ENCODE measurements at regions of chr11 and their contacts with region 1.

Region 1: GRCh38 chr11:59753650-59754493 is 1.3 kb upstream of the STX3 start:
- DNase-seq: peak; percentile 90
- ATAC-seq: peak; percentile 26
- H3K4me3 ChIP-seq: peak overlapping the region; percentile 92
- H3K27ac ChIP-seq: no peak overlapping the region
- H3K4me1 ChIP-seq: peaks cover 20% of the 10 kb centered on the region
- H3K27me3 ChIP-seq: no peaks in the 10 kb centered on the region
- CTCF ChIP-seq: peak; percentile 96

Region 2: GRCh38 chr11:59550368-59550841 is 203.5 kb before region 1 on chr11:
- CTCF ChIA-PET with region 1: no interaction called
- POLR2A ChIA-PET with region 1: no interaction called
- intact Hi-C with region 1: loop called (anchors 10 kb)
- DNase-seq: peak; percentile 99
- ATAC-seq: peak; percentile 91
- H3K4me3 ChIP-seq: peak overlapping the region; percentile 73
- H3K27ac ChIP-seq: peak overlapping the region; percentile 68
- H3K4me1 ChIP-seq: peaks cover 9% of the 10 kb centered on the region
- H3K27me3 ChIP-seq: no peaks in the 10 kb centered on the region
- CTCF ChIP-seq: peak; percentile 54

Region 3: DNA sequence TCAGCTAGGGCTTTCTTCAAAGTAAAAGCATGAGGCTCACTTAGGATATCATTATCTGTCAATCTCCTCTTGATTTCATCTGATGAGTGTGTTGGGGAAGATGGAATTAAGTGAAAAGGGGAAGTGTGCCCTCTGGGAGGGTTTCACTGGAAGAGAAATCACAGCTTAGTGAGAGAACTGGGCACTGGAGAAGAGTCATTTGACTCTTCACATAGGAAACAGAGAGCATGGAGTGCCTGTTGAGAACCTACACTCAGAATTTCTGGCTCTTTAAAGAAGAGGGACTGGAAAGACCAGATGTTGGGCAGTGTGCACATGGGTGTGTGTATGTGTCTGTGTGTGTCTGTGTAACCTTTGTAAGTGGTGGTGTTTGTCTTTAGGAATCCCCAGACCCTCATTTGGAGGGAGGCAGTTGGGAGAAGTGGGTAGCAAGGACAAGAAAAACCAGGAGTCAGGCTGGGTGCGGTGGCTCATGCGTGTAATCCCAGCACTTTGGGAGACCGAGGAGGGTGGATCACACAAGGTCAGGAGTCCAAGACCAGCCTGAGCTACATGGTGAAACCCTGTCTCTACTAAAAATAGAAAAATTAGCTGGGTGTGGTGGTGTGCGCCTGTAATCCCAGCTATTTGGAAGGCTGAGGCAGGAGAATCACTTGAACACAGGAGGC is 11.3 kb after region 1 on chr11:
- CTCF ChIA-PET with region 1: no interaction called
- POLR2A ChIA-PET with region 1: no interaction called
- intact Hi-C with region 1: no loop called
- DNase-seq: no peak
- ATAC-seq: no peak
- H3K4me3 ChIP-seq: no peak overlapping the region
- H3K27ac ChIP-seq: no peak overlapping the region
- H3K4me1 ChIP-seq: no peaks in the 10 kb centered on the region
- H3K27me3 ChIP-seq: no peaks in the 10 kb centered on the region
- CTCF ChIP-seq: no peak

Region 4: DNA sequence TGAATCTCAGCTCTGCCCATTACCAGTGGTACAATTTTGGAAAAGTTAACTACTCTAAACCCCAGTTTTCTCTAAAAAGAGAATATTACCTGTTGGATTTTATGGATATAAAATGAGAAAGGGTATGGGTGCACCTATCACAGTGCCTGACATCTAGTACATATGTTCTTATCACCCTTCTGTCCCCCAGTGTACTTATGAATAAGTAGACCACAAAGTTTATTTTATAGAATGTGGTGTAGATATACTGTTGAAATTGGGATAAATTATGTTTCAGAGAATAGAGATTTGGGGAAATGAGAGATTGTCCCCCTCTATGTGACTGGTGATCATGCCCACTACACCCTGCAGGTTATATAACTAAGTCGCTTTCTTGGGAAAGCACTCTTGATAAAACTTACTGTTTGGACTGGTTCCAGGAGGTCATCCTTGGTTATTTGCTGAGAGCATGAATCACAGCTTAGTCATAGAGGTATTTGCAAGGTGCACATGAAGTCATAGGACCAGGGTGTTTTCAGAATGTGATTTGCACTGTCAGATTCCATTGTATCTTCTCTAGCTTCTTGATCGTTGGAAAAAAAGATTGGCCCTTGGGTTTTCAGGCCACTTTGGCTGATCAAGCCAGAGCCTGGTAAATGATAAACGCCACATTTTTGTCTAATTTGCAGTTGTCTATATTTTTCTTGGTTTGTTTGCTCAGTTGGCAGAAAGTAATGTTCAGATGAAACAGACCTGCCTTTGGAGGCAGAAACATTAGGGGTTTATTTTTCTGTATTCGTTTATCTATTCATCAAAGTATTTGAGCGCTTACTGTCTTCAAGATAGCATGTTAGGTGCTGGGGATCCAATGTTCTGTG is 22.6 kb after region 1 on chr11:
- CTCF ChIA-PET with region 1: interaction called, 4 read pairs
- POLR2A ChIA-PET with region 1: interaction called, 9 read pairs
- intact Hi-C with region 1: loop called (anchors 1 kb)
- DNase-seq: peak; percentile 99
- ATAC-seq: peak; percentile 83
- H3K4me3 ChIP-seq: peak overlapping the region; percentile 22; the same call in 1 of the 2 replicates
- H3K27ac ChIP-seq: peak overlapping the region; percentile 39
- H3K4me1 ChIP-seq: peaks cover 32% of the 10 kb centered on the region
- H3K27me3 ChIP-seq: no peaks in the 10 kb centered on the region
- CTCF ChIP-seq: no peak

Region 5: DNA sequence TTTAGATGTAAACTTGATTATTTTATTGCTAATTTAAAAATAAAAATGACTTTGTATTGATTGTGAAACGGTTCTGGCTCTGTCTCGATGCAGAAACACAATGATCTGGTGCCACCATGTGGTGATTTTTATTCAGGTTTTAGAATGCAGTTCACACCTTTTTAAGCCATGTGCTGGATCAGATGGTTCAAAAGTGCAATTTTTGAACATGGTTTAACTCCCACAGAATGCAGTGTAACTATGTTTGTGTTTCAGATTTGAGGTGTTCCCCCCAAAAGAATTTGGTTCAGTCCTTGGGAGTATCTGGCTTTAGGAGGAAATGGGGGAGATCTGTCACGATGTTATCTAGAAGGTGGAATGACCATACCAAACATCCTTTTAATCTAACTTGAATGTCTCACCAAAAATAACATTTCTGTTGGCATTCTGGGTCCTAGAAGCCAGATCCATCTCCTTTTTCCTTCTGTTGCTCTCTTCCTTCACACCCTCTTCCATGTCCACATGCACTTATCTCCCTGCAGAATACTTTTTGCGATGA is 48.8 kb after region 1 on chr11:
- CTCF ChIA-PET with region 1: interaction called, 29 read pairs
- POLR2A ChIA-PET with region 1: interaction called, 6 read pairs
- intact Hi-C with region 1: loop called (anchors 1 kb)
- DNase-seq: peak; percentile 84
- ATAC-seq: peak; percentile 46
- H3K4me3 ChIP-seq: no peak overlapping the region
- H3K27ac ChIP-seq: no peak overlapping the region
- H3K4me1 ChIP-seq: peaks cover 25% of the 10 kb centered on the region
- H3K27me3 ChIP-seq: no peaks in the 10 kb centered on the region
- CTCF ChIP-seq: peak; percentile 89

Region 6: DNA sequence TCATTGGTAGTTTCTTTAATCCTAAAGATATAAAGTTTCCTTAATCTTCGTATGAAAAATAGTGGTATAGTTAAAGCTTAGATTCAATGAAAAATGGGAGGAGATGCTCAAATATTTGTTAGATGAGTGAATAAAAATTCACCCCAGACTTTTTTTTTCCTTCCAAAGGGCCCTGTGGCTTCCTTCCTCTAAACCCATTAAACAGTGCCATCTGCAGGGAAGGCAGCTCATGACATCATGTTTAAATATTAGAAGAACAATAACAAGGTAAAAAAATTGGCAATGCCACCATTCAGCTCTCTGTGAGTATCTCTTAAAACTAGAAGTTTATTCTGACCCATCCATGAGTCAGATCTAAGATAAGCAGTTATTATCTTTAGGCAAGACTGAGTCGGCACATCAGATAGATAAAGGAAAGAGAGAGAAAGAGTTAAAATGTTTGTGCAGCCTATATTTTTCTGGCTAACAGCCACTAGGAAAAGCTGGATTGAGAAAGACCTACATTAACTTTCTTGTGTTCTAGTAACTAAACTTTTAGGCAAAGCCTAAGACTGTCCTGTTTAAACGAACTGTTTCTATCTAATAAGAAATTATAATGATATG is 165.2 kb after region 1 on chr11:
- CTCF ChIA-PET with region 1: no interaction called
- POLR2A ChIA-PET with region 1: no interaction called
- intact Hi-C with region 1: loop called (anchors 1 kb)
- DNase-seq: peak; percentile 91
- ATAC-seq: peak; percentile 46; the same call in 1 of the 2 replicates
- H3K4me3 ChIP-seq: no peak overlapping the region
- H3K27ac ChIP-seq: peak overlapping the region; percentile 11
- H3K4me1 ChIP-seq: peaks cover 9% of the 10 kb centered on the region
- H3K27me3 ChIP-seq: no peaks in the 10 kb centered on the region
- CTCF ChIP-seq: peak; percentile 92

Region 7: GRCh38 chr11:60121264-60121663 is 367.4 kb after region 1 on chr11:
- CTCF ChIA-PET with region 1: no interaction called
- POLR2A ChIA-PET with region 1: no interaction called
- intact Hi-C with region 1: no loop called
- DNase-seq: no peak
- ATAC-seq: no peak
- H3K4me3 ChIP-seq: no peak overlapping the region
- H3K27ac ChIP-seq: no peak overlapping the region
- H3K4me1 ChIP-seq: peaks cover 13% of the 10 kb centered on the region
- H3K27me3 ChIP-seq: no peaks in the 10 kb centered on the region
- CTCF ChIP-seq: no peak